ENCODE measurements at regions of chr16 and their contacts with region 1.

Region 1: GRCh38 chr16:76500006-76500405 is 222.8 kb downstream of the CNTNAP4 start:
- DNase-seq: no peak
- ATAC-seq: no peak
- H3K4me3 Mint-ChIP-seq: no peak overlapping the region
- H3K27ac Mint-ChIP-seq: no peak overlapping the region
- H3K4me1 Mint-ChIP-seq: no peaks in the 10 kb centered on the region
- H3K27me3 Mint-ChIP-seq: no peaks in the 10 kb centered on the region
- CTCF ChIP-seq: no peak

Region 2: GRCh38 chr16:76483307-76483909 is 16.6 kb before region 1 on chr16:
- CTCF ChIA-PET with region 1: no interaction called
- POLR2A ChIA-PET with region 1: no interaction called
- intact Hi-C with region 1: no loop called
- DNase-seq: no peak
- ATAC-seq: no peak
- H3K4me3 Mint-ChIP-seq: no peak overlapping the region
- H3K27ac Mint-ChIP-seq: no peak overlapping the region
- H3K4me1 Mint-ChIP-seq: no peaks in the 10 kb centered on the region
- H3K27me3 Mint-ChIP-seq: no peaks in the 10 kb centered on the region
- CTCF ChIP-seq: no peak

Region 3: DNA sequence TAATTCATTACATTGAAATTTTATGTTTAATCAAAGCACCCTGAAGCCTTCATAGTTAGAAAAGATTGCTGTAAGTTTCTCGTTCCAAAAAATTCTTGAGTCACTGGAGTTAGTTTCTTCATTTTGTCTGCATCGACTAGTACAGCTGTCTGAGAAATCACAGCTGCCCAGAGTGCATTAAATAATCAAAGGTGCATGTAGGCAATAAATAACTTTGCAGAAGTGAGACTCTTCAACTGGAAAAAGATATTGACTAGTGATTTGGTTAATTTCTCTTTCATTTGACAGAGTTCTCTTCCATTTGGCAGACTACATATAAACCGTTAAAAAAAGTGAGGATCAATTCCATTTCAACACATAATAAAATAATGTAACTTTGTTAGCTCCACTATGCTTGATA is 11.2 kb after region 1 on chr16:
- CTCF ChIA-PET with region 1: no interaction called
- POLR2A ChIA-PET with region 1: no interaction called
- intact Hi-C with region 1: loop called (anchors 1 kb)
- DNase-seq: no peak
- ATAC-seq: no peak
- H3K4me3 Mint-ChIP-seq: no peak overlapping the region
- H3K27ac Mint-ChIP-seq: no peak overlapping the region
- H3K4me1 Mint-ChIP-seq: no peaks in the 10 kb centered on the region
- H3K27me3 Mint-ChIP-seq: no peaks in the 10 kb centered on the region
- CTCF ChIP-seq: no peak

Region 4: DNA sequence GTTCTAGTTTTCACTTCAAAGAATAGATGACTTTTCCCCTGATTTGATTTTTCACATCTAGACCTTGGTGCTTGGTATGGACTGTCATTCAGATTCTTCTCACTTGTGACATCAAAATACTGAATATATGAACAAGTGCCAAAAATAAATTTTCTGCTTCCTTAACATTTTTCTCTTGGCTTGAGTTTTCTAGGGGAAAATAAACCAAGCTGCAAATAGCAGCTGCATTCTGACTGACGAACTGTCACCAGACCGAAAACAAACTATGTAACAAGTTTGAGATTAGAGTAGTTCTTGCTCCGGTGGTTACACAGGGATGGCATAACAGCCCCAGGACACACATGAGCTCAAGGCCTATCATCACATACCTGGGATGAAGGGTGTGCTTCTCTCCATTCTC is 122.9 kb after region 1 on chr16:
- CTCF ChIA-PET with region 1: no interaction called
- POLR2A ChIA-PET with region 1: no interaction called
- intact Hi-C with region 1: no loop called
- DNase-seq: no peak
- ATAC-seq: no peak
- H3K4me3 Mint-ChIP-seq: no peak overlapping the region
- H3K27ac Mint-ChIP-seq: no peak overlapping the region
- H3K4me1 Mint-ChIP-seq: no peaks in the 10 kb centered on the region
- H3K27me3 Mint-ChIP-seq: peaks cover 2% of the 10 kb centered on the region
- CTCF ChIP-seq: no peak

Measured in activated B cell treated with CpG ODN at 0.5 μM for 24 hours (primary cell).